AG04450 (cell line): ENCODE measurements at regions of chr11 and their contacts with region 1.

Region 1: DNA sequence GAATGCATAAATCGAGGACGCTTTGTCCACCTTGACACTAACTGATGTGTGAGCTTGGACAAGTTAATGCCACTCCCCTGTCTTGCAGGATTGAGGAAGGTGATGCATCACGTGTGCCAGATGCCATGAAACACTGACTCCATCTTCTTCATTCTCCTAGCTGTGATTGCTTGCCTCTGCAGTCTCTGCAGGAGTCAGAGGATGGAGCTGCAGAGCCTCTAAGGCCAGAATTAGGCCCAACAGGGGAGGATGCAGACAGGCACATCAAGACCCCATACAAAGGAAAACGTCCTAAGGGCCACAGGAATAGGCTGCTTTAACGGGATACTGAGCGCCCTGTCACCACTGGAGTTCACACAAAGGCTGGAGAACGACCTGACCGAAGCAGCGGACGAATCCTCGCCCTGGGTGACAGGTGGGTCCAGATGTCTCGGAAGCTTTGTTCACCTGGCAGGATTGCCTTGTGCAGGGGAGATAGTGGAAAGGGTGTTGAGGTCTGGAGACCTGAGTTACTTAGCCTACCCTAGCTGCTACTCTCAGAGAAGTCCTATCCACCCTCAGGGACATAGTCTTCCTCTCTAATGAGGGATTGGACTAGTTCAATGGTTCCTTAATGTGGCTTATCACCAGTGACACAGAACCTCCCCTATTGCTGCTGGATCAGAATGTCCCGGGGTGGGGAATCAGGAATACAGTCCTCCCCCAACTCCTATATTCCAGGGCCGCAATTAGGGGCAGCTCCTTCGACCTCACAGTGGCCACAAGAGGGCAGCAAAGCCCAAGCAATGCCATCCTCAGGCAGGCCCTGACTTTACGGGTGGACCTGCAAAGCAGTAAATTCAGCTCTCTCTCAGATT is 32.4 kb downstream of the DBX1 start:
- DNase-seq: peak; percentile 48
- H3K4me3 ChIP-seq: no peak overlapping the region
- H3K27ac ChIP-seq: no peak overlapping the region
- H3K27me3 ChIP-seq: no peaks in the 10 kb centered on the region
- CTCF ChIP-seq: peak; percentile 89

Region 2: GRCh38 chr11:19820100-19820499 is 307.8 kb before region 1 on chr11:
- CTCF ChIA-PET with region 1: no interaction called
- POLR2A ChIA-PET with region 1: no interaction called
- DNase-seq: no peak
- H3K4me3 ChIP-seq: no peak overlapping the region
- H3K27ac ChIP-seq: no peak overlapping the region
- H3K27me3 ChIP-seq: no peaks in the 10 kb centered on the region
- CTCF ChIP-seq: no peak

Region 3: GRCh38 chr11:19879307-19880087 is 248.4 kb before region 1 on chr11:
- CTCF ChIA-PET with region 1: no interaction called
- POLR2A ChIA-PET with region 1: no interaction called
- DNase-seq: no peak
- H3K4me3 ChIP-seq: no peak overlapping the region
- H3K27ac ChIP-seq: no peak overlapping the region
- H3K27me3 ChIP-seq: no peaks in the 10 kb centered on the region
- CTCF ChIP-seq: no peak

Region 4: GRCh38 chr11:19912958-19913892 is 214.7 kb before region 1 on chr11:
- CTCF ChIA-PET with region 1: interaction called, 66 read pairs
- POLR2A ChIA-PET with region 1: interaction called, 3 read pairs
- DNase-seq: no peak
- H3K4me3 ChIP-seq: no peak overlapping the region
- H3K27ac ChIP-seq: peak overlapping the region; percentile 31
- H3K27me3 ChIP-seq: no peaks in the 10 kb centered on the region
- CTCF ChIP-seq: no peak

Region 5: DNA sequence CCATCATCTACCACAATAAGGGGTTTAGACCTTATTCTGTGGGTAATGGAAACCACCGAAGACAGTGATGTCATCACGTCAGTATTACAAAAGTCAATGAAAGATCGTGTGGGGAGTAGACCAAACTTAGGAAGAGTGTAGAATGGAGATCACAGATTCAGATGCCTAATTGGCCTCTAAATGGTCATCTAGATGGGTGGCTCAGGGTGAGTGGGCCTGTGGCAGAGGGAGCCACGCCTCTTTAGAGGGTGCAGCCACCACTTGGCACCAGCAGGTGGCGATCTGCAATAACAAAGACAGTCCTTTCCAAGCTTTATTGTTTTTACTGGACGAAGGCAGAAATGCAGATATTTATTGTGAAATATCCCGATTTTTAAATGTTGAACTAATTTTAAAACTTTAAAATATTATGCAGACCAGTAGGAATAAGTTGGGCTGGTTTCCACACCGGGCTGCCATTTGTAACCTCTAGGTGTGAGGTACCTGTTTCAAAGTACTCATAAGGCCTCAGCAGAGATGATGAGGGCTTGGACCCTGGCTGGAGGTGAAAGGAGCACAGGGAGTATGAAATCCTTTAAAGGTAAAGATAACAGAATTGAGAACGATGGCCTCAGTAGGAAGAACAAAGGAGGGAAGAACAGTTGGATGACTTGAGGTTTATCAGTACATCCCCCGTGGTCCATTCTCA is 189.6 kb before region 1 on chr11:
- CTCF ChIA-PET with region 1: interaction called, 28 read pairs
- POLR2A ChIA-PET with region 1: no interaction called
- DNase-seq: no peak
- H3K4me3 ChIP-seq: no peak overlapping the region
- H3K27ac ChIP-seq: no peak overlapping the region
- H3K27me3 ChIP-seq: no peaks in the 10 kb centered on the region
- CTCF ChIP-seq: peak; percentile 78

Region 6: DNA sequence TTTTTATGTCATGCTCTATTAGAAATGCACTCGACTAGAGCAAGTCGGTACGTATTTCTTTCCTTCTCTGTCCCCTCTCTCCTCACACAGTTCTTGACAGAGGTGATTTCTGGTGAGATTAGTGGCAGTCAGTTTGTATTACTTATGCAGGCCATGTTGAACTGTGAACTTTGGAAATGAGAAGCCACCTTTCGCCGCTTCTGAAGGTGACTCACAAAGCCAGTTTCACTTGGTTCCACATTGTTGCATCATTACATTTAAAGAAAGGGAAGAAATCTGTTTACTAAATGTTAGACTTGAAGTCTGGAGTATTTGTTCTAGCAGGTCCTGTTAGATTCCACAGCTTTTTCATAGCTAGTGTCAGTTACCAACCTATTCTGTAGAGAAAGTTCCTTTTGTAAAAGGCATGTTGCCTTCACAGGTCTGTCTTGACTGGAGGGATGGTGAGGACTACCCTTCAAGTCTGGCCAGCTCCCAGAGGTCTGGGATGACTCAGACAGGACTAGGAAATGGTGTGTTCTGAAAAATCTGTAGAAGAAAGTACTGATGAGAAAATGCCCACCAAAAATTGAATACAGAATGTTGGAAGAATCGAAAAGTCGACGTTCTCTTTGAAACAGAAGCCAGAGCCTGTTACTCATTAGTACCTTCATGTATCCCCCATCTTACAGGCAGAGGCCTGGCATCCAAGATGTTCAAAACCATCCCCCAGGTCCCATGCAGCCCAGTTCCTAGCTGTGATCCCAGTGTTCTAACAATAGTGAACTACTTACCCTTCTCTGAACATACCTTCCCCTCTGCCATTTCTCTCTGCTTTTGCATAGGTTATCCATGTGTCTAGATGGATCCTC is 149.0 kb before region 1 on chr11:
- CTCF ChIA-PET with region 1: interaction called, 16 read pairs
- POLR2A ChIA-PET with region 1: no interaction called
- DNase-seq: peak; percentile 65
- H3K4me3 ChIP-seq: no peak overlapping the region
- H3K27ac ChIP-seq: peak overlapping the region; percentile 79
- H3K27me3 ChIP-seq: no peaks in the 10 kb centered on the region
- CTCF ChIP-seq: no peak

Region 7: DNA sequence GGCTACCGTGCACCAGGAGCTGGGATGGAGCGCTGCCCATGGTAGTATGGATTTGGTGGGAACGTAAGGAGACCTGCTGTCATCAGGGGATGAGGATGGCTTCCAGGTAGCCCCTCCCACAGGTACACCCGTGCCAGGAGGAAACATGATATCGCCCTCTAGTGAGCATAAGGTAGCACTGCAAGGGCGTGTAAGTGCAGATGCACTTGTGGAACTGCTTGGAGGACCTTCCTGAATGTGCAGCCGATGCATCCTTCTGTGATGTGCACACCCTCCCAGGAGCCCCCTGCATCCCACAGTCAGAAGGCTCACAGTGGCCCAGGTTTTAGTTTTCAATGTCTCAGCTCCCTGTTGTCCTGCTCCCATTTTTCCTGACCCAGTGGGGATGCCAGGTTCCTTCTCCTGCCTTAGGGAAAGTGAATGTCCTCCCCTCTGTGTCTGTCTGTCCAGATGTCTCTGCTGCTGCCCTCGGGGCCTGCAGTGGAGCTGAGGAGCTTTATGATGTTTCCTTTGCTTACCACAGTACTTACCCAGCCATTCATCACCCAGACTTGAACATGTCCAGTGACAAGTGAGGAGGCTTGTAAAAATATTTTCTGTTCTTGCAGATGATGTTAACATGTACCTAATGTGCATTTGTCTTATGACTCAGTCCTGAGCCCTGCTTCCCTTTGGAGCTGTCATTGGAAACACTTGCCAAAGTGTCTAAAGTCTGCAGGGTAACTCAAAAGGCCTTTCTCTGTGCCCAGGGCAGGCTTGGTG is 16.8 kb before region 1 on chr11:
- CTCF ChIA-PET with region 1: interaction called, 78 read pairs
- POLR2A ChIA-PET with region 1: interaction called, 4 read pairs
- DNase-seq: no peak
- H3K4me3 ChIP-seq: no peak overlapping the region
- H3K27ac ChIP-seq: peak overlapping the region; percentile 97
- H3K27me3 ChIP-seq: no peaks in the 10 kb centered on the region
- CTCF ChIP-seq: peak; percentile 88

Region 8: DNA sequence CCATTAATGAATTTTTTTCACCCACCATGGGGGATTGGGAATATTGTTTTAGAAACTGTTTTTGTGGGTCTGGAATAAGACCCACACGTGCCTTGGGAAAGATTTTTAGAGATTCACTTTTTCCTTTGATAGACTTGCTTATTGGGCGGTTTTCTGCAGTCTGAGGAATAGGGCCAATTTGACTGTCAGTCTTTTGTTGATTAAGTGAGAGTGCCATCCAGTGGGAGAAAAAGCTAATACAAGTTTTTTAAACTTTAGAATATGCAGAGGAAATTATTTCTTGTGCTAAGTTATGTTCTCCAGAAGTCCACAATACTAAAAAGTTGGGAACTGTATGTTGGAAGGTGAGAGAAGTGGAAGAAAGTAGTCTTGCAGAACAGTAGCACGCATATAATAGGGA is 315.7 kb after region 1 on chr11:
- CTCF ChIA-PET with region 1: interaction called, 16 read pairs
- POLR2A ChIA-PET with region 1: no interaction called
- DNase-seq: no peak
- H3K4me3 ChIP-seq: no peak overlapping the region
- H3K27ac ChIP-seq: no peak overlapping the region
- H3K27me3 ChIP-seq: no peaks in the 10 kb centered on the region
- CTCF ChIP-seq: peak; percentile 51

Region 9: GRCh38 chr11:20783220-20783619 is 655.3 kb after region 1 on chr11:
- CTCF ChIA-PET with region 1: no interaction called
- POLR2A ChIA-PET with region 1: no interaction called
- DNase-seq: no peak
- H3K4me3 ChIP-seq: no peak overlapping the region
- H3K27ac ChIP-seq: no peak overlapping the region
- H3K27me3 ChIP-seq: no peaks in the 10 kb centered on the region
- CTCF ChIP-seq: no peak